ENCODE measurements at regions of chr10 and their contacts with region 1.

Region 1: GRCh38 chr10:6482737-6483357 is 97.2 kb downstream of the PRKCQ start:
- DNase-seq: peak in 1 of 5 donors; percentile 20
- H3K4me3 ChIP-seq: no peak overlapping the region
- H3K4me3 Mint-ChIP-seq: peak overlapping the region; percentile 17 to 81 (median 58)
- H3K27ac ChIP-seq: peak overlapping the region; percentile 24
- H3K27ac Mint-ChIP-seq: peak overlapping the region; percentile 59 to 85 (median 74)
- H3K4me1 ChIP-seq: peaks cover 29% of the 10 kb centered on the region
- H3K4me1 Mint-ChIP-seq: peaks cover 27 to 45% (median 36%) of the 10 kb centered on the region in 4 donors
- H3K27me3 ChIP-seq: no peaks in the 10 kb centered on the region
- H3K27me3 Mint-ChIP-seq: no peaks in the 10 kb centered on the region

Region 2: GRCh38 chr10:6498771-6499170 is 15.9 kb after region 1 on chr10:
- CTCF ChIA-PET with region 1: interaction called, 10 read pairs
- POLR2A ChIA-PET with region 1: interaction called, 11 read pairs
- intact Hi-C with region 1: no loop called
- DNase-seq: peak; percentile 62 to 83 (median 74)
- H3K4me3 ChIP-seq: peak overlapping the region in 1 of 2 donors; percentile 4
- H3K4me3 Mint-ChIP-seq: peak overlapping the region in 7 of 8 donors; percentile 39 to 87 (median 75)
- H3K27ac ChIP-seq: peak overlapping the region; percentile 59
- H3K27ac Mint-ChIP-seq: peak overlapping the region in 6 of 7 donors; percentile 91 to 96 (median 95)
- H3K4me1 ChIP-seq: peaks cover 65% of the 10 kb centered on the region
- H3K4me1 Mint-ChIP-seq: peaks cover 40 to 49% (median 48%) of the 10 kb centered on the region in 4 donors
- H3K27me3 ChIP-seq: no peaks in the 10 kb centered on the region
- H3K27me3 Mint-ChIP-seq: no peaks in the 10 kb centered on the region